ENCODE measurements at regions of chr20 and their contacts with region 1.

Region 1: DNA sequence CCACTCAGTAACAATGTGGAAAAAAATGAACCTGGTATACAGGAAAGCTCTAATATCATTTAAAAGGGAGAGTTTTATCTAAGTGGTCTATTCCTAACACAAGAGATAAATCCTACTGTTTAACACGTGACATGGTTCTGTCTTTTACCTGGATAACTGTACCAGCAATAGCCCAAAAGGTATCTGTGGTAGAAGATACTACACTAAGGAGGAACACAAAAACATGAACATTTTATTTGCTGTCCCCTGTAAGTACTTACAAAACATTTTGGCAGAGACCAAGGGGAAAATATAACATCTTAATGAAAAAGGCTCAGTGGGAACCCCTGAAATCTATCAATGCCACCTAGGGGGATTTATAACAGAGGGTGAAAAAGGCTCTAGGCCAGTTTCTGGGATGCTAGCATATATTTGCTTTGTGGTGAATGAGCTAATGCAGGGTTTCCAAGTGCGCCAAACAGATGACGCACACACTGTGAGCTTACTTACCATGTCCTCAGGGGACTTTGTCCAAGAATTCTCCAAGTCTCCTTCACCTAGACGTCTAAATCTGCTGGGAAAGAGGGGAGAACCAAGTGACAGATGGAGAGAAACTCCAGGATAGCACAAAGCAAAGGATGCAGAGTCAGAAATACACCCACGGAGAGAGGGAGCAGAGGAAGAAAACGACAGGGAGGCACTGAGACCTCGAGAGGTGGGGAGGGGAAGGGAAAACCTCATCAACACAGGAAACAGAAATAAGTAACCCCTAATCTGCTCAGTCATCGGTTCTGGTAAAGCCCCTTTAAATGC is 147.9 kb upstream of the PRND start:
- DNase-seq: peak; percentile 80
- H3K4me3 ChIP-seq: peak overlapping the region; percentile 11
- H3K27ac ChIP-seq: peak overlapping the region; percentile 54
- H3K4me1 ChIP-seq: peaks cover 33% of the 10 kb centered on the region
- H3K27me3 ChIP-seq: no peaks in the 10 kb centered on the region
- CTCF ChIP-seq: no peak

Region 2: DNA sequence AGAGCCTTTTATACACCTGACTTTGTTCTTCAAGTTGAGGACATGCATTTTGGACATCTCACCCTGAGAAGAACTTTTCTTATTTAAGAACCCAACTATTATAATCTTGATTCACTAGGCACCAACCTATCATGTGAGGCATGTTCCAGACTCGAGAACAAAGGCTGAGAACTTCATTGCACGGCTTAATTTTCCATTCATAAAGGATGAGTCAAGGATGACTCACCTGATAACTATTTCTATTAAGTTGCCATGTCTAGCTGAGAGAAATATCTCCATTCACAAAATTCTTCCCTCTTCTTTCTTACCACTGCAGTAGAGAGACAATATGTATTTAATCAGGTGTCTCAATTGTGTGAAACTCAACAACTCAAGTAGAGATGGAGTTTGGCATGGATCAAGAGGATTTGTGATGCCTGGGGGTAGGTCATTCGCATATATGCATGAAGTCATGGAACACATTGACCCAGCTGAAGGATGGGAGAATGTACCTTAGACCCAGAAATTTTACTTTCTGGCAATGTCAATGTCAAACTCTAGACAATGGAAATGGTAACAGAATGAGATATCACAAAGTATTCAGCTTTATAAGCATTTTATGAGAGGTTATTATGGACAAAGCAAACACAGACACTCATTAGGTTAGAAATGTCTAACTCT is 60.7 kb before region 1 on chr20:
- CTCF ChIA-PET with region 1: no interaction called
- POLR2A ChIA-PET with region 1: no interaction called
- intact Hi-C with region 1: loop called (anchors 5 kb)
- DNase-seq: peak; percentile 86
- H3K4me3 ChIP-seq: no peak overlapping the region
- H3K27ac ChIP-seq: no peak overlapping the region
- H3K4me1 ChIP-seq: peaks cover 35% of the 10 kb centered on the region
- H3K27me3 ChIP-seq: no peaks in the 10 kb centered on the region
- CTCF ChIP-seq: no peak

Region 3: DNA sequence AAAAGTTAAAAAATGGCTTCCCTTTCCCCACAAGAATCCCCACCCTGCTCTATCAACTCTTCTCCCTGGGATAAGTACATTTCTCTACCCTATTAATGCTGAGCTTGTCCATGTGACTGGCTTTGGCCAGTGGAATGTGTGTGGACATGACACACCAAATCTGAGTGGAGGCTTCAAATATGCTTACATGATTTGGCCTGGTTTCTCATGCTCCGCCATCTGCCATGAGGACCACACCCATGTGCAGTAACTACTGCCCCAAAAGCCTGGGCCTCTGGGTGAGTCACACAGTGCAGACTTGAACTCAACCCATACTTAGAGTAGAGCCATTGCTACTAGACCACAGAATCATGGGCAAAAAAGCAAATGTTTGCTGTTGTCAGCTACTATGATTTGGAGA is 213.3 kb after region 1 on chr20:
- CTCF ChIA-PET with region 1: no interaction called
- POLR2A ChIA-PET with region 1: no interaction called
- intact Hi-C with region 1: no loop called
- DNase-seq: no peak
- H3K4me3 ChIP-seq: no peak overlapping the region
- H3K27ac ChIP-seq: no peak overlapping the region
- H3K4me1 ChIP-seq: no peaks in the 10 kb centered on the region
- H3K27me3 ChIP-seq: no peaks in the 10 kb centered on the region
- CTCF ChIP-seq: no peak